ENCODE measurements at regions of chr13 and their contacts with region 1.

Region 1: DNA sequence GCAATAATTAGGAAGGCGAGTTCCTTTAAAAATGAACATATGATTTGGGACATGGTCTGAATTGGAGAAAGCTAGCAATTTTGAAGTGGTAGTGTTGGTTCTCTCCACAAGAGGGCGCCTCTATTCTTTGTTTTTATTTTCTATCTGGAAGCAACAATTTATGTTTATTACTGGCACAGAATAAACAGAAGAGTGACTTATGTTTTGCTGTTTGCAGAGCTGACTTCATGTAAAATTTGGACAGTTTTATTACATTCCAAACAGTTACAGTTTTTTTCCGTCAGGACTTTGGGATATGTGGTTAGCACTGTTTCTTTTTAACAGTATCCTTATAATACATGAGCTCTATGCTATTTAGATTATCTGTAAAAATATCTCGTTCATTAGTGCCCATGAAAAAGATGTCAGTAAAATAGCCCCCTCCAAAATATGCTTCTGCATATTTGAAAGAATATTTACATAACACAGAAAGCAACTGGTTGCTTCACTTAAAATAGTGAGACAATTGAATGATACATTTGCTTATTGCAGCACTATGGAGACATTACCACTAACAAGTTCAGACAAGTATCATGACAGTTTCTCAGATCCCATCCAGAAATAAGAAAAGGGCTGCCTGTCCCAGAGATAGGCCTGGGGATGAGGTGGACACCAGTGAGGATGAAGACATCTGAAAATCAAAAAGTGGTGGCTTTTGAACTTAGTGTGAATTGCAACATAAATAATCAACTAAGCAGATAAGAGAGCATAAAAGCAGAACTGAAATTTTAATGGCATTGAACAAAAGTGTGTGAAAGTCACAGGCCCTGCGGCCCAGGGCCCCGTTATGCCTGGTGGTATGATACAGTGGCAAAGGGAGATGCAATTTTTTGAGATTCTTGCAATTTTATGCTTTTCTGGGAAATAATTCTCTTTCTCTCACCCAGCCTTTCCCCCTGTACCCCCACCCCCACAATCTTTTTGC is 32.3 kb upstream of the FGF9 start:
- DNase-seq: no peak
- ATAC-seq: no peak
- H3K4me3 Mint-ChIP-seq: no peak overlapping the region
- H3K27ac Mint-ChIP-seq: no peak overlapping the region
- H3K4me1 Mint-ChIP-seq: no peaks in the 10 kb centered on the region
- H3K27me3 Mint-ChIP-seq: peaks cover 12% of the 10 kb centered on the region
- CTCF ChIP-seq: peak; percentile 40

Region 2: GRCh38 chr13:21481359-21481758 is 157.2 kb before region 1 on chr13:
- CTCF ChIA-PET with region 1: no interaction called
- POLR2A ChIA-PET with region 1: no interaction called
- intact Hi-C with region 1: no loop called
- DNase-seq: no peak
- ATAC-seq: no peak
- H3K4me3 Mint-ChIP-seq: no peak overlapping the region
- H3K27ac Mint-ChIP-seq: no peak overlapping the region
- H3K4me1 Mint-ChIP-seq: peaks cover 13% of the 10 kb centered on the region
- H3K27me3 Mint-ChIP-seq: no peaks in the 10 kb centered on the region
- CTCF ChIP-seq: no peak

Region 3: GRCh38 chr13:21749410-21749809 is 110.8 kb after region 1 on chr13:
- CTCF ChIA-PET with region 1: no interaction called
- POLR2A ChIA-PET with region 1: no interaction called
- intact Hi-C with region 1: loop called (anchors 10 kb)
- DNase-seq: no peak
- ATAC-seq: no peak
- H3K4me3 Mint-ChIP-seq: no peak overlapping the region
- H3K27ac Mint-ChIP-seq: no peak overlapping the region
- H3K4me1 Mint-ChIP-seq: no peaks in the 10 kb centered on the region
- H3K27me3 Mint-ChIP-seq: no peaks in the 10 kb centered on the region
- CTCF ChIP-seq: no peak

Region 4: GRCh38 chr13:22278336-22278929 is 639.8 kb after region 1 on chr13:
- CTCF ChIA-PET with region 1: interaction called, 30 read pairs
- POLR2A ChIA-PET with region 1: no interaction called
- intact Hi-C with region 1: loop called (anchors 1 kb)
- DNase-seq: no peak
- ATAC-seq: peak; percentile 54
- H3K4me3 Mint-ChIP-seq: no peak overlapping the region
- H3K27ac Mint-ChIP-seq: no peak overlapping the region
- H3K4me1 Mint-ChIP-seq: peaks cover 4% of the 10 kb centered on the region
- H3K27me3 Mint-ChIP-seq: no peaks in the 10 kb centered on the region
- CTCF ChIP-seq: no peak

Region 5: DNA sequence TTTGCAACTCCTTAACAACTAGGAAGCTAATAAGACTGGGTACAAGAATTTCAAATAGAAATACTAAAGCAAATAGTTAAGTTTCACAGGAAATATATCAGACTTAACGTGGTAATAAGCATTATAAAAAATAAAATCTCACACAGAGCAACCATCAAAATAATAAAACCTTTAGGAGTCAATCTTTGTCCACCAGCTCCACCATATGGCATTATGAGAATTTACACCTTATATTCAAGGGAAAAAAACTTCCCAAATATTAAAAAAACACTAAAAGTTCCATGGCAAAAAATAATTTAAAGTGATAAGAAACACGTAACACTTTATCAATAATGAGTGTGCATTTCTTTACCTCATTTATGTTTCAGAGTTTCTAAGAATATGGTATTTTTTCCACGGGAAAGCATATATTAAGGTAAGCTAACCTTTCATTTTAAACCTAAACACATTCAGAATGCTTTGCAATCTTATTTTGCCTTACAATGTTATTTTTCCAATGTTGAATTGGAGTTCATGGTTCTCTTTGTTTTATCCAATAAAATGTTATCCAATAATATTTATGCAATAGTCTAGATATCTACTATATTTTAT is 1119.0 kb after region 1 on chr13:
- CTCF ChIA-PET with region 1: interaction called, 5 read pairs
- POLR2A ChIA-PET with region 1: no interaction called
- intact Hi-C with region 1: loop called (anchors 5 kb)
- DNase-seq: no peak
- ATAC-seq: no peak
- H3K4me3 Mint-ChIP-seq: no peak overlapping the region
- H3K27ac Mint-ChIP-seq: no peak overlapping the region
- H3K4me1 Mint-ChIP-seq: no peaks in the 10 kb centered on the region
- H3K27me3 Mint-ChIP-seq: no peaks in the 10 kb centered on the region
- CTCF ChIP-seq: no peak

Region 6: GRCh38 chr13:23020223-23020843 is 1381.7 kb after region 1 on chr13:
- CTCF ChIA-PET with region 1: interaction called, 11 read pairs
- POLR2A ChIA-PET with region 1: no interaction called
- intact Hi-C with region 1: loop called (anchors 1 kb)
- DNase-seq: no peak
- ATAC-seq: peak; percentile 64
- H3K4me3 Mint-ChIP-seq: no peak overlapping the region
- H3K27ac Mint-ChIP-seq: no peak overlapping the region
- H3K4me1 Mint-ChIP-seq: no peaks in the 10 kb centered on the region
- H3K27me3 Mint-ChIP-seq: no peaks in the 10 kb centered on the region
- CTCF ChIP-seq: no peak

Measured in activated B cell treated with CpG ODN at 0.5 μM for 24 hours (primary cell).